Gastrocnemius medialis (tissue), 4 donors: ENCODE measurements at regions of chr19 and their contacts with region 1.

Region 1: DNA sequence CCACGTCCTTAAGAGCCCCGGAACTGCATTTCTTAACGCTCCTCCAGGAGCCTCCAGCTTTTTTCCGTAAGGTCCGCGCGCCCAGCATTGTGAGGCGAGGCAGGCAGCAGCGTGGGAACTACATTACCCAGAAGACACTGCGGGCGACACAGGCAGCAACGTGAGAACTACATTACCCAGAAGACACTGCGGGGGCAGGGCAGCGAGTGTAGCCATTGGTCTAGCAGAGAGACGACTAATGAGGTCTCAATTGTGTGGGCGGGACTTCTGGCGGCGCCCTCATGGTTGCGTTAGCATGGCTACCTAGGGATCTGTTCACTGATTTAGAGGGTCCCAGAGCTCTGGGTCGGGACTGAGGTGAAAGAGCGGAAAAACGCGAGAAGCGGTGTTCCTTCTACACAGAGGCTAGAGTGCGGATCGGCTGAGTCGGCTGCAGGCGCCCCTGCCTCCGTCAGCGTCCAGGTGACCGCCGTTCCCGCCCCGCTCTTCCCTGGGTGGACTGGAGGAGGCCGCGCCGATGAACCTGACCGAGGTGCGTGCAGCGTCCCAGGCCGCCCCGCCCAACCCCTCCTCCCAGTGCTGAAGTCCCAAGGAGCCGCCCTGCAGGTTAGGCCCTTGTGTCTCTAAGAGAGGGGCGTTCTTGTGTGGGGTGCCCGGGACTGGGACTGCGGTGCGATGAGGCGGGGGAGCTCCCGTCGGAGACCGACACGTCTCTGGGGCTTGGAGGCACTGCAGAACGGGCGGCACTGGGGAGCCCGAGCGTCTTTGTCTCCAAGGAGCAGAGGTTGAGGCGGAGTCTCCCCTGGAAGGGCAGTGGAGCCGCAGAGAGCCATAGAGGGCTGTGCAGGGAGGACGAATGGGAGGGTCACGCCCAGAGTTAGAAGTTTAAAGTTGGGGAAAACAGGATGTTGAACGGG is at the start of gene ZNF749:
- DNase-seq: peak; percentile 97 to 99
- ATAC-seq: peak; percentile 100
- H3K4me3 ChIP-seq: peak within 1 kb of the TSS; percentile 87 to 94 (median 90)
- H3K27ac ChIP-seq: peak within 1 kb of the TSS; percentile 70 to 79 (median 75)
- H3K4me1 ChIP-seq: peaks cover 14 to 17% of the 10 kb centered on the region in 2 donors
- H3K27me3 ChIP-seq: no peaks in the 10 kb centered on the region
- CTCF ChIP-seq: no peak
- POLR2A ChIP-seq: no peak
- total RNA-seq, gene ZNF749: 3.1 to 11.4 (median 3.9) TPM

Region 2: DNA sequence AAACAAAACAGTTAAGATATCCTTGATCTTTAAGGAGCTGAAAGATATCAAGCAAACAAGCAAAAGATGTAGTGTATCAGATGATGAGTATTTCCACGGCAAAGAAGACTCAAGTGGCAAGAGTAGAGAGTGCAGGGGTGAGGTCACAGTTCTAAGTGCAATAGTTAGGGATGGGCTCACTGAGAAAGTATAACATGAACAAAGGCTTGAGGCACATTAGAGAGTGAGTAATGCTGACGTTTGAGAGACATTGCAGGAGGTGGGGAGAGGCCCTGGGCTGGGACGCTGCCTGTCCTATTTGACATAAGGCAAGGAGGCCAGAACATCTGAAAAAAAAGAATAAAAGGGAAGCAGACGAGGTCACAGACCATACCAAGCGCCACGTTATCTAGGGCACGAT is 269.5 kb before region 1 on chr19:
- in situ Hi-C with region 1: no loop called
- intact Hi-C with region 1: no loop called
- DNase-seq: no peak
- ATAC-seq: no peak
- H3K4me3 ChIP-seq: no peak overlapping the region
- H3K27ac ChIP-seq: no peak overlapping the region
- H3K4me1 ChIP-seq: no peaks in the 10 kb centered on the region
- H3K27me3 ChIP-seq: no peaks in the 10 kb centered on the region
- CTCF ChIP-seq: no peak
- POLR2A ChIP-seq: no peak

Region 3: GRCh38 chr19:57350877-57351805 is 84.2 kb before region 1 on chr19 and contains the start of gene ZNF304:
- in situ Hi-C with region 1: no loop called
- intact Hi-C with region 1: no loop called
- DNase-seq: peak; percentile 90 to 93
- ATAC-seq: peak; percentile 97 to 98
- H3K4me3 ChIP-seq: peak within 1 kb of the TSS; percentile 77 to 99 (median 93)
- H3K27ac ChIP-seq: peak within 1 kb of the TSS; percentile 78 to 96 (median 92)
- H3K4me1 ChIP-seq: peaks cover 22 to 29% of the 10 kb centered on the region in 2 donors
- H3K27me3 ChIP-seq: no peaks in the 10 kb centered on the region
- CTCF ChIP-seq: no peak
- POLR2A ChIP-seq: peak; percentile 33 to 36
- total RNA-seq, gene ZNF304: 4.1 to 6.5 (median 4.8) TPM

Region 4: GRCh38 chr19:57410877-57411671 is 24.2 kb before region 1 on chr19 and contains the start of gene ZNF17:
- in situ Hi-C with region 1: no loop called
- intact Hi-C with region 1: loop called (anchors 1 kb)
- DNase-seq: peak; percentile 93 to 95
- ATAC-seq: peak; percentile 99 to 100
- H3K4me3 ChIP-seq: peak within 1 kb of the TSS; percentile 83 to 94 (median 92)
- H3K27ac ChIP-seq: peak within 1 kb of the TSS; percentile 78 to 88 (median 84)
- H3K4me1 ChIP-seq: peaks cover 15 to 21% of the 10 kb centered on the region in 2 donors
- H3K27me3 ChIP-seq: no peaks in the 10 kb centered on the region
- CTCF ChIP-seq: no peak
- POLR2A ChIP-seq: peak; percentile 20 to 47
- total RNA-seq, gene ZNF17: 3.3 to 6.4 (median 5.4) TPM

Region 5: DNA sequence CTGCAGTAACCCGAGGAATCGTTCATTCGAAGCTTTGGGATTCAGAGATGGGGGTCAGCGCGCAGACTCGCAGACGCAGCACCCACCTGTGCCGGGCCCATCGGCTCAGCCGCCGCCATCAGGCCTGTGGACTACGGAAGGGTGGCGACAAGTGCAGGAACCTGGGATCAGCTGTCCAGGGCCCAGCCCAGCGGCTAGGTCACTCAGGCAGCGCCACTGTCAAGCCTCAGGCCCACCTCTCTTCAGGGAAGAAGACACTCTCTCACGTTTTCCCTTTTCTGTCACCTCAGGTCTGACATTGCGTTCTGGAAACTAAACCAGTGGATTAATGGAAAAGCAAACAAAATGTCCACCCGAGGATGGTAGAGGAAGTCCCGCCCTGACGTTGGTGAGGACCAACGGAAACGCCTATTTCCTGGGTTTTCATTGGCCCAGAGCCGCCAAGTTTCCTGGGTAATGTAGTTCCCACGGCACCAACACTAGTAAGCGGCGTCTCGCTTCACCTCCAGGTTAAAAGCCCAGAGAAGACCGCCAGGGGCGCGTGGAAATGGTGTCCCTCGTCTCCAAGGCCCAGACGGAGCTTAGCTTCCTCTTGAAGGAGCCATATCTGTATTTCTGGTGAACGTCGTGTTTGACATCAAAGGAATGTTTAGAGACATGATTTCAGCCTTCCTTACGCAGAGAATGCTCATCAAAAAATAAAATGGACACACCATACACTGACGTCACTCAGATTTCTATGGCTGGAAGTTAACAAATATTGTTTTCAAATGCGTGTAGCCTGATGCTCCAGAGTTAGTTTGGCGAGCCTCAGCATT is 42.1 kb after region 1 on chr19 and contains the start of gene ZNF772:
- in situ Hi-C with region 1: no loop called
- intact Hi-C with region 1: loop called (anchors 1 kb)
- DNase-seq: peak; percentile 89 to 91
- ATAC-seq: peak; percentile 100
- H3K4me3 ChIP-seq: peak within 1 kb of the TSS; percentile 79 to 84 (median 81)
- H3K27ac ChIP-seq: peak within 1 kb of the TSS; percentile 79 to 91 (median 86)
- H3K4me1 ChIP-seq: peaks cover 12 to 13% of the 10 kb centered on the region in 2 donors
- H3K27me3 ChIP-seq: no peaks in the 10 kb centered on the region
- CTCF ChIP-seq: peak; percentile 47 to 70 (median 61)
- POLR2A ChIP-seq: peak in 1 of 2 donors; percentile 20
- total RNA-seq, gene ZNF772: 8.3 to 26.7 (median 17.6) TPM

Region 6: DNA sequence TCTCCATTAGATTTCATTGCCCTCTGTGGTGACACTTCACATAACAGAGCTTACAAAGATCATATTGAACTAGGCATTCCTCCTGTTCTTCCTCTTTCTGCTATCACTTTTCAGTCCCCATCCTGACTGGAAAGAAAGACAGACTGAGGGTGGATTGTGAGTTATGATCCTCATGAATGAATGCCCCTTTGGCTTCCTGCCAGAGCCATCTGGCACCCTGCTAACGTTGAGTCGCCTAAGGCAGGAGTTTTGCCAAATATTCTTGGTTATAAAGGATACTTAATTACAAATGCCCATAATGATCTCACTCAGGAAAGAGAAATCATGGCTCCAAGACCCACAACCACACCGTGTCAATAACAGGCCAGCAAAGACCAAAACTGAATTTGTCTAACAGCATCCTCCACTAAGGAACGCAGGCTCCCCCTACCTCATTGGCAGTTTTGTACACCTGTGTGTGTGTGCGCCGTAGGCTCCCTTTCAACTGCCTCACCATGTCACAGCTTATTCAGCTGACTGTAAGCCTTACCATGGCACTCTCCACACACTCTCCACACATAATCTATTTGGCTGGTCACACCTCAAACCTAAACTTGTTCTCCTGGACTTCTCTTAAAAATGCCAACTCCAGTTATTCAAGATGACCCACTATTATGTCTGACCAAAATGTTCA is 213.1 kb after region 1 on chr19:
- in situ Hi-C with region 1: no loop called
- intact Hi-C with region 1: no loop called
- DNase-seq: no peak
- ATAC-seq: no peak
- H3K4me3 ChIP-seq: no peak overlapping the region
- H3K27ac ChIP-seq: no peak overlapping the region
- H3K4me1 ChIP-seq: no peaks in the 10 kb centered on the region
- H3K27me3 ChIP-seq: no peaks in the 10 kb centered on the region
- CTCF ChIP-seq: no peak
- POLR2A ChIP-seq: no peak

Region 7: GRCh38 chr19:57914531-57914930 is 479.2 kb after region 1 on chr19:
- in situ Hi-C with region 1: no loop called
- intact Hi-C with region 1: no loop called
- DNase-seq: no peak
- ATAC-seq: no peak
- H3K4me3 ChIP-seq: no peak overlapping the region
- H3K27ac ChIP-seq: no peak overlapping the region
- H3K4me1 ChIP-seq: peaks cover 10 to 11% of the 10 kb centered on the region in 2 donors
- H3K27me3 ChIP-seq: no peaks in the 10 kb centered on the region
- CTCF ChIP-seq: no peak
- POLR2A ChIP-seq: no peak